ENCODE measurements at regions of chr17 and their contacts with region 1.

Region 1: GRCh38 chr17:13558588-13558987 is 43.1 kb downstream of the HS3ST3A1 start:
- DNase-seq: no peak
- ATAC-seq: no peak
- H3K4me3 ChIP-seq: no peak overlapping the region
- H3K27ac ChIP-seq: no peak overlapping the region
- H3K4me1 ChIP-seq: peaks cover 9 to 19% of the 10 kb centered on the region in 2 experiments; a peak in 4 of 5 replicates
- H3K27me3 ChIP-seq: no peaks in the 10 kb centered on the region
- CTCF ChIP-seq: no peak
- EP300 ChIP-seq: no peak
- POLR2A ChIP-seq: no peak
- RAD21 ChIP-seq: no peak

Region 2: DNA sequence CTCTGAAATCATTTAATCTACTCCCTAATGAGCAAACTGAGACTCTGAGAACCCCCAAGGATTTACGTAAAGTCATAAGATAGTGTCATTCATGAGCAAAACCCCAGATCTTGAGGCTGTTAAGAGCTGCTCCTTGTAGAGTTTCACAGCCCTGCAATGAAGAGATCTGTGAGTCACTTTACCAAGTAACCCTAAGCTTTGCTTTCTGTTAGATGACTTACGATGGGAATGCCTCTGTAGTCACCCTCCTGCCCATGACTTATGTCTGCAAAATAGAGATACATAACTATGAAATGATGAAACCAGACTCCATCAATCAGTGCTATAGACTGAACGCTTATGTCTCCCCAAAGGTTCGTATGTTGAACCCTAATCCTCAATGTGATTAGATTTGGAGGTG is 74.6 kb before region 1 on chr17:
- CTCF ChIA-PET with region 1: no interaction called
- POLR2A ChIA-PET with region 1: no interaction called
- in situ Hi-C with region 1: no loop called
- intact Hi-C with region 1: no loop called
- DNase-seq: no peak
- ATAC-seq: no peak
- H3K4me3 ChIP-seq: no peak overlapping the region
- H3K27ac ChIP-seq: no peak overlapping the region
- H3K4me1 ChIP-seq: no peaks in the 10 kb centered on the region
- H3K27me3 ChIP-seq: no peaks in the 10 kb centered on the region
- CTCF ChIP-seq: no peak
- EP300 ChIP-seq: no peak
- POLR2A ChIP-seq: no peak
- RAD21 ChIP-seq: no peak

Region 3: GRCh38 chr17:13510062-13510461 is 48.5 kb before region 1 on chr17:
- CTCF ChIA-PET with region 1: no interaction called
- POLR2A ChIA-PET with region 1: no interaction called
- in situ Hi-C with region 1: no loop called
- intact Hi-C with region 1: no loop called
- DNase-seq: peak; percentile 69 to 91 (median 74)
- ATAC-seq: peak; percentile 88
- H3K4me3 ChIP-seq: peak overlapping the region; percentile 13; the same call in 1 of the 2 replicates
- H3K27ac ChIP-seq: peak overlapping the region; percentile 89
- H3K4me1 ChIP-seq: peaks cover 18 to 53% of the 10 kb centered on the region in 2 experiments
- H3K27me3 ChIP-seq: no peaks in the 10 kb centered on the region
- CTCF ChIP-seq: no peak
- EP300 ChIP-seq: peak; percentile 98
- POLR2A ChIP-seq: no peak; the same call in 1 of the 2 replicates
- RAD21 ChIP-seq: peak in 1 of 2 experiments; percentile 26; a peak in 2 of 4 replicates

Region 4: GRCh38 chr17:13520899-13521572 is 37.6 kb before region 1 on chr17:
- CTCF ChIA-PET with region 1: no interaction called
- POLR2A ChIA-PET with region 1: interaction called, 4 read pairs
- in situ Hi-C with region 1: no loop called
- intact Hi-C with region 1: loop called (anchors 1 kb)
- DNase-seq: no peak
- ATAC-seq: peak; percentile 36
- H3K4me3 ChIP-seq: no peak overlapping the region
- H3K27ac ChIP-seq: peak overlapping the region; percentile 77
- H3K4me1 ChIP-seq: peaks cover 8 to 25% of the 10 kb centered on the region in 2 experiments
- H3K27me3 ChIP-seq: no peaks in the 10 kb centered on the region
- CTCF ChIP-seq: no peak
- EP300 ChIP-seq: no peak
- POLR2A ChIP-seq: no peak
- RAD21 ChIP-seq: no peak

Region 5: DNA sequence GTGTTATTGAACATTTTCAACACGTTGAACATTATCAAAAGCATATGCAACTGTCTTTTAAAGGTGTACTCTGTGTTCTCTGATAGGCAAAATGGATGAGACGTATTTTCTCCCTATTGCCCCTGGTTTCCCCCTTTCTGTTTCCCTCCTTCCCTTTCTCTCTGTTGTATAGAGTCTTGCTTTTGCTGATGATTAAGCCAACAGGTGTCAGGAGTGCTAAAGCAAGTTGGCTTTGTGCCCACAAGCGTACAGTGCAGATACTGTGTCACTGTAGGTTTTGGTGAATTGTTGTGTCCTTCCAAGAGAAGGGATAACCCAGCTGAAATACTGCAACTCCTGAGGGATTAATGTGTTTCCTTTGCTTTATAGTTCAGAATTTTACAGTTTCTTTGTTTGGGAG is 585.1 kb after region 1 on chr17:
- CTCF ChIA-PET with region 1: no interaction called
- POLR2A ChIA-PET with region 1: no interaction called
- in situ Hi-C with region 1: no loop called
- intact Hi-C with region 1: no loop called
- DNase-seq: peak in 1 of 4 experiments; percentile 9
- ATAC-seq: no peak
- H3K4me3 ChIP-seq: no peak overlapping the region
- H3K27ac ChIP-seq: no peak overlapping the region
- H3K4me1 ChIP-seq: no peaks in the 10 kb centered on the region
- H3K27me3 ChIP-seq: no peaks in the 10 kb centered on the region
- CTCF ChIP-seq: no peak
- EP300 ChIP-seq: no peak
- POLR2A ChIP-seq: no peak
- RAD21 ChIP-seq: no peak

Measured in K562 (cell line).